ENCODE measurements at regions of chr6 and their contacts with region 1.

Region 1: GRCh38 chr6:161418463-161418945 is 144.6 kb upstream of the AGPAT4 start:
- DNase-seq: peak; percentile 85
- ATAC-seq: peak; percentile 80
- H3K4me3 ChIP-seq: no peak overlapping the region
- H3K27ac ChIP-seq: no peak overlapping the region
- H3K4me1 ChIP-seq: peaks cover 2% of the 10 kb centered on the region; the same call in 1 of the 2 replicates
- H3K27me3 ChIP-seq: no peaks in the 10 kb centered on the region
- CTCF ChIP-seq: peak; percentile 74
- POLR2A ChIP-seq: no peak
- RAD21 ChIP-seq: peak; percentile 78

Region 2: GRCh38 chr6:161327360-161327953 is 91.0 kb before region 1 on chr6:
- CTCF ChIA-PET with region 1: no interaction called
- POLR2A ChIA-PET with region 1: no interaction called
- dilution Hi-C with region 1: no loop called
- in situ Hi-C with region 1: no loop called
- intact Hi-C with region 1: no loop called
- DNase-seq: no peak
- ATAC-seq: no peak
- H3K4me3 ChIP-seq: no peak overlapping the region
- H3K27ac ChIP-seq: no peak overlapping the region
- H3K4me1 ChIP-seq: no peaks in the 10 kb centered on the region
- H3K27me3 ChIP-seq: no peaks in the 10 kb centered on the region
- CTCF ChIP-seq: no peak
- POLR2A ChIP-seq: no peak
- RAD21 ChIP-seq: no peak

Region 3: DNA sequence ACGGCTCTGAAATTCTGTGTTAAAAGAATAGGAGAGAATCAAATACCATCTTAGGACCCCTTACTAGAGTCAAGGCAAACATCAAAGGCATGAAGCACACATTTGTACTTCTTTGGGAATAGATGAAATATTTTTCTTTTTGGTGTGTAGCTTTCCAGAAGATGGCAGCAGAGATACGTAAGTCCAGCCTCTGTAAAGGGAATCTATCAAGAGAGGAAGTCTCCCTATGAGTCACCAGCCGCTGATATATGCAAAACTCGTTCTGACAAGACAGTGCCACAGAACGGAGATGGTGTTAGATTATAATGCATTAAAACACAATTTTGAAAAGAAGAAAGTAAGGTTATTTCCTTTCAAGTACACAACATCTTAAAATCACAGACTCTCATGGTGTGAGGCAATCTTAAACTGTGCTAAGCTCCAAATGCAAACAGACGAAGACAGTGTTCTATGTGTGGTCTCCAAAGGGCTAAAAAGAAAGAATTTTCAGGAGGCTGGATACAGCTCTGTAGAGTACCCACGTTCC is 24.6 kb before region 1 on chr6:
- CTCF ChIA-PET with region 1: interaction called, 12 read pairs
- POLR2A ChIA-PET with region 1: no interaction called
- dilution Hi-C with region 1: no loop called
- in situ Hi-C with region 1: no loop called
- intact Hi-C with region 1: no loop called
- DNase-seq: peak; percentile 90
- ATAC-seq: peak; percentile 98
- H3K4me3 ChIP-seq: no peak overlapping the region
- H3K27ac ChIP-seq: no peak overlapping the region
- H3K4me1 ChIP-seq: no peaks in the 10 kb centered on the region
- H3K27me3 ChIP-seq: no peaks in the 10 kb centered on the region; the same call in 1 of the 2 replicates
- CTCF ChIP-seq: peak; percentile 81
- POLR2A ChIP-seq: no peak
- RAD21 ChIP-seq: peak; percentile 88

Region 4: DNA sequence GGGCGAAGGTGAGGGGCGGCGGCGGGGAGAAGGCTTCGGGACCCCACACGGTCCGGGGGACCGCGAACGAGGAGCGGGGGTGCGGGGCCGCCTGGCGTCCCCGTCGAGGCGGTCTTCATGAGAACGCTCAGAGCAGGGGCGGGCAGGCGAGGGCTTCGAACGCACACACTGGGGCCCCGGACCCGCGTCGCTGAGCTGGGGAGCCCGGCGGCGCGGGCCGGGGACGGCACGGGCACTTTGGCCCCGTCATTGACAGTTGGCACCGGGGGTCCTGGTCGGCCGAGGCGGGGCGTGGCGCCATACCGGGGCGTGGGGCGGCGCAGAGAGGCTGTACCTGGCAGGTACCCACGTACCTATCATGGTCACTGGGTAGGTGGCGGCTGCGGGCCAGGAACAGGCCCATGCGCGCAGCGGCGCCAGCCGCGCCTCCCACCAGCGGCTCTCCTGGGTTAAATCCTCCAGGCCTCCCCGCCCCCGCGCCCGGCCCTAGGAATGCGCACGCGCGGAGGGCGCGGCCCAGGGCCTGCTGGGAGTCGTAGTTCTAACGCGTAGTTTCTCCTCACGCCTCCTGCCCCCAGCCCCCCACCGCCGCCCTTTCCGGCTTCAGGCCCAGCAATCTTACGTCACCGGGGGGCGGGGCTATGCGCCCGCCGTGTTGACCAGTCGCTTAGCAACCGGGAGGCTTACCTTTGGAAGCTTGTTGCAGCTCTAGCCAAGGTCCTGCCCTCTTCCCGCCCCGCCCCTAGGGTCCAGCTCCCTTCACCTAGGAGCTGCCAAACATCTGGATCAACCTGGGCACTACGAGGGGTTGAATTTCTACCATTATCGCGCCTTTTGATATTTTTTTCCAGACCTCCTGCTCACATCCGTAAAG is 1309.0 kb after region 1 on chr6 and contains the starts of genes PACRG and PRKN:
- CTCF ChIA-PET with region 1: no interaction called
- POLR2A ChIA-PET with region 1: no interaction called
- dilution Hi-C with region 1: no loop called
- in situ Hi-C with region 1: loop called (anchors 25 kb)
- intact Hi-C with region 1: no loop called
- DNase-seq: peak; percentile 85
- ATAC-seq: peak; percentile 100
- H3K4me3 ChIP-seq: peak within 1 kb of the TSS; percentile 69
- H3K27ac ChIP-seq: no peak within 1 kb of the TSS
- H3K4me1 ChIP-seq: no peaks in the 10 kb centered on the region
- H3K27me3 ChIP-seq: no peaks in the 10 kb centered on the region
- CTCF ChIP-seq: no peak
- POLR2A ChIP-seq: peak; percentile 31; the same call in 1 of the 2 replicates
- RAD21 ChIP-seq: no peak
- total RNA-seq, gene PACRG: not detected in 2 replicates
- total RNA-seq, gene PRKN: 0.18 and 0.28 TPM in 2 replicates

Measured in IMR-90 (cell line).